Activated B cell treated with CpG ODN at 0.5 μM for 24 hours (primary cell): ENCODE measurements at regions of chr2 and their contacts with region 1.

Region 1: GRCh38 chr2:191274413-191274815 is 29.2 kb downstream of the MYO1B start:
- DNase-seq: no peak
- ATAC-seq: peak; percentile 79
- H3K4me3 Mint-ChIP-seq: peak overlapping the region; percentile 72
- H3K27ac Mint-ChIP-seq: peak overlapping the region; percentile 78
- H3K4me1 Mint-ChIP-seq: peaks cover 72% of the 10 kb centered on the region
- H3K27me3 Mint-ChIP-seq: no peaks in the 10 kb centered on the region
- CTCF ChIP-seq: no peak

Region 2: DNA sequence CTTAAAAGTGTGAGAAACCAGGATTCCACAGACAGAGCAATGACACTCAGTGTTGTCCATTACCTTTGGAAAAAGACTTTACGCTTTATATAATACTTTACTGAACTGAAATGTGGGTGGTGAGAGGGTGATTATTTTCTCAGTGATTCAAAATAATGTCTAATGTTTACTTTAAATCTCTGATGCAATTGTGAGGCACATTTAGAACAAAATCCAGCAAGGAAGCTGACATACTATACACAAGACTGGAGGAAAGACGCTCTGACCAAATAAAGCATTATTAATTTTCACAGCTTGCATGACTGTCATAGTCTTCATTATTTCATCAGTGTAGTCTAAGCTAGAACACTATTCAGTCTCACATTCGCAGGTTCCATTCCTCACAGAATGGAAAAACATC is 226.3 kb before region 1 on chr2:
- CTCF ChIA-PET with region 1: no interaction called
- POLR2A ChIA-PET with region 1: no interaction called
- intact Hi-C with region 1: no loop called
- DNase-seq: no peak
- ATAC-seq: no peak
- H3K4me3 Mint-ChIP-seq: no peak overlapping the region
- H3K27ac Mint-ChIP-seq: no peak overlapping the region
- H3K4me1 Mint-ChIP-seq: no peaks in the 10 kb centered on the region
- H3K27me3 Mint-ChIP-seq: peaks cover 9% of the 10 kb centered on the region
- CTCF ChIP-seq: no peak

Region 3: GRCh38 chr2:191321861-191322686 is 47.7 kb after region 1 on chr2:
- CTCF ChIA-PET with region 1: no interaction called
- POLR2A ChIA-PET with region 1: no interaction called
- intact Hi-C with region 1: loop called (anchors 5 kb)
- DNase-seq: no peak
- ATAC-seq: peak; percentile 78
- H3K4me3 Mint-ChIP-seq: peak overlapping the region; percentile 4
- H3K27ac Mint-ChIP-seq: no peak overlapping the region
- H3K4me1 Mint-ChIP-seq: peaks cover 48% of the 10 kb centered on the region
- H3K27me3 Mint-ChIP-seq: no peaks in the 10 kb centered on the region
- CTCF ChIP-seq: no peak

Region 4: GRCh38 chr2:191591908-191592307 is 317.5 kb after region 1 on chr2:
- CTCF ChIA-PET with region 1: no interaction called
- POLR2A ChIA-PET with region 1: no interaction called
- intact Hi-C with region 1: no loop called
- DNase-seq: no peak
- ATAC-seq: no peak
- H3K4me3 Mint-ChIP-seq: no peak overlapping the region
- H3K27ac Mint-ChIP-seq: no peak overlapping the region
- H3K4me1 Mint-ChIP-seq: no peaks in the 10 kb centered on the region
- H3K27me3 Mint-ChIP-seq: peaks cover 2% of the 10 kb centered on the region
- CTCF ChIP-seq: no peak